ENCODE measurements at regions of chr10 and their contacts with region 1.

Region 1: GRCh38 chr10:25016376-25017154 is at the start of gene THNSL1:
- DNase-seq: peak; percentile 100
- H3K4me3 ChIP-seq: peak within 1 kb of the TSS; percentile 66
- H3K4me3 Mint-ChIP-seq: peak within 1 kb of the TSS; percentile 86
- H3K27ac Mint-ChIP-seq: peak within 1 kb of the TSS; percentile 97
- H3K4me1 ChIP-seq: peaks cover 8% of the 10 kb centered on the region; the same call in 1 of the 2 replicates
- H3K4me1 Mint-ChIP-seq: peaks cover 14% of the 10 kb centered on the region
- H3K27me3 ChIP-seq: no peaks in the 10 kb centered on the region
- H3K27me3 Mint-ChIP-seq: no peaks in the 10 kb centered on the region
- CTCF ChIP-seq: no peak
- total RNA-seq, gene THNSL1: 6.3 and 6.8 TPM in 2 replicates

Region 2: DNA sequence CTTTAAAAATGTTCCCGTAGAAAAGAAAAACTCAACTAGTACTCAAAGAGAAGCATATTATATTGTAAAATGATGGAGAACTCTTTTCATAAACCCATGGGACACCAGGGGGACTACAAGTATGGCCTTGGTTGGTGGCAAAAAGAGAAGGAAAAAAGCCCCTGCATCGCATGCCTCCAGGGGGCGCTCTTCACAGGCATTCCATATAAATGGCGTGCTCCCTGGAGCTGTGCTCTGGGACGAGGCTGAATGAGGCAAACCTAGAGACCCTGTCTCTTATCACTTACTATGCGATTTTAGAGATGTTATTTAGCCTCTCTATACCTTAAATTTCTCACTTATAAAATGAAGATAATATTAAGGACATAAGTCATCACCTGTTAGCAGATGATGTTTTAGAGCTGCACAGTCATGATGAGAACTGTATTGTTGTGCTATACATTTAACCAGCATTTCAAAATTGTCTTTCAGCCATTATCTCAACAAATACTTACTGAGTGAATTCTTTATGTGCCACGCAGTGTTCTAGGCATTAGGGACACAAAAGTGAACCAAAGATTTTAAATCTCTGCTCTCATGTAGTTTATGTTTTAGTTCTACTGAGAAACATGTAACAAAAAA is 398.7 kb before region 1 on chr10:
- CTCF ChIA-PET with region 1: interaction called, 6 read pairs
- POLR2A ChIA-PET with region 1: no interaction called
- intact Hi-C with region 1: loop called (anchors 1 kb)
- DNase-seq: peak; percentile 79 to 87
- H3K4me3 ChIP-seq: no peak overlapping the region
- H3K4me3 Mint-ChIP-seq: peak overlapping the region; percentile 67
- H3K27ac Mint-ChIP-seq: peak overlapping the region; percentile 69
- H3K4me1 ChIP-seq: peaks cover 21% of the 10 kb centered on the region
- H3K4me1 Mint-ChIP-seq: peaks cover 13% of the 10 kb centered on the region
- H3K27me3 ChIP-seq: no peaks in the 10 kb centered on the region
- H3K27me3 Mint-ChIP-seq: no peaks in the 10 kb centered on the region
- CTCF ChIP-seq: peak; percentile 94 to 99

Region 3: DNA sequence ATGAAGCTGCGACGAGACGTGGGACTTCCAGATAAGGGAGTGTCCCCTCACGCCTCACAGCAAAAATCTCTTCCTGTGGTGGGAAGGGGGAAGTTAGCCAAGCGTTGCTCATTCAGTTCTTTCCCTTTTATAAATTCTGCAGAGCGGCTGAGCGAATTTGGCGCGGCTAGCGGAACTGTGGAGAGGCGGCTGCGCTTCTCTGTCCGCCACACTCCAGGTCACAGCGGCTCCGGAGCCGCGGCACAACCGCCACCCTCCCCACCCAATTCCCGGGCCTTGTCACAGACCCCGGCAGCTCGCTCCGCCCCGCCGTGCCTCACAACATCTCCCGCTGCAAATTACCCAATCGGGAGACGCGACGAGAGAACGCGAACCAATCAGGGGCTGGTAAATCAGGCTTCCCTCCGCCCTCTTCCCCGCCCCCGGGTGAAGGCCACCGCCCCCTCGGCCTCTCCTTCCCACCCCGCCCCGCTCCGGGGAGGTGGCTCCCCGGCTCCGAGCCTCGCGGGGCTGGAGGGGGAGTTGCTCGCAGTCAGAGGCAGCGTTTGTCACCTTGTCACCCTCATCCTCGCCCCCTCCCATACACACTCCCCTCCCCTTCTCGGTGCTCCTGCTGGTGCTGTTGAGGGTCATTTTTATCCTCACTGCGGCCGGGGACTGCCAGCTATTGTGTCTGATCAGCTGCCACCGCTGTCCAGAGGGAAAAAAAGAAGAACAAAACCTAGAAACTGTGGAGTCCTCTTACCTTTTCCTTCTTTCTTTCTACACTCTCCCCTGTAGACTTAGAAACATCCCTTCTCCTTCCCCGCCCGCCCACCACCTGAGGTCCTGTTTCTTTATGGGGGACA is 292.0 kb before region 1 on chr10:
- CTCF ChIA-PET with region 1: no interaction called
- POLR2A ChIA-PET with region 1: interaction called, 3 read pairs
- intact Hi-C with region 1: loop called (anchors 1 kb)
- DNase-seq: peak; percentile 99 to 100
- H3K4me3 ChIP-seq: peak overlapping the region; percentile 85
- H3K4me3 Mint-ChIP-seq: no peak overlapping the region
- H3K27ac Mint-ChIP-seq: peak overlapping the region; percentile 86
- H3K4me1 ChIP-seq: peaks cover 8% of the 10 kb centered on the region
- H3K4me1 Mint-ChIP-seq: peaks cover 21% of the 10 kb centered on the region
- H3K27me3 ChIP-seq: no peaks in the 10 kb centered on the region
- H3K27me3 Mint-ChIP-seq: no peaks in the 10 kb centered on the region
- CTCF ChIP-seq: no peak

Region 4: DNA sequence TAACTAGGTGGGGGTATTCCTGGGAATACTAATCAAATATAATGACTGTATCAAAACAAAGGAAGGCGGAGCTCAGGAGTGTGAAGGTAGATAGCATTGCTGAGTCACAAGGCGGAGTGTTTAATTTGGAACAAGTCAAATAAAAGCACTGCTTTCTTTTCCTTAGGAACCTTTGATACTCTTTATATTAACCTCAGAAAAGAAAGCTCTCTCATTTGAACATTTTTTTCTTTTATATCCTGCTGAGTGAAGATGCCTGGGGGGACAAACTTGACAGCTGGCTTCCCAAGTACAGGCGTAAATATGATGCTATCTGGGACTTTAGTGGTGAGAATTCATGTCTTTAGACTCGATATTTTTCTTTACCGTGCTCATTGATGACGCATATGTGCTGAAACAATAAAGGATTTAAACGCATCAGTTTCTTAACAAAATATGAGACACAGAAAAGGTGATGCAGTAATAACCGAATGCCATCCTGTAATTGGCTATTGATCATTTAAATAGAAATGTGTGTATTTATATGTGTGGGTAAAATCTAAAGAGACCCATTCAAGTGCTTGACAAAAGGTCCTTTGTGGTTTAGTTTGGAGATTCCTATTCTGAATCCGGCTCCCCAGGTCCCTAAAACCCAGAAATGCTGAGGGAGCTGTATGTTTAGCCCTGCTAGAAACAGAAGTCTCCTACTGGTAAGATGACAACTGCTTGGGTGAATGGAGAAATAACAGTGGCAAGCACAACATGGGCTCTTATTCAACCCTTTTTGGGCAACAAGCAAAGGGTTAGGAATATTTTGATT is 166.9 kb before region 1 on chr10:
- CTCF ChIA-PET with region 1: no interaction called
- POLR2A ChIA-PET with region 1: no interaction called
- intact Hi-C with region 1: loop called (anchors 5 kb)
- DNase-seq: no peak
- H3K4me3 ChIP-seq: no peak overlapping the region
- H3K4me3 Mint-ChIP-seq: no peak overlapping the region
- H3K27ac Mint-ChIP-seq: no peak overlapping the region
- H3K4me1 ChIP-seq: peaks cover 10% of the 10 kb centered on the region
- H3K4me1 Mint-ChIP-seq: peaks cover 10% of the 10 kb centered on the region
- H3K27me3 ChIP-seq: no peaks in the 10 kb centered on the region
- H3K27me3 Mint-ChIP-seq: no peaks in the 10 kb centered on the region
- CTCF ChIP-seq: no peak

Region 5: DNA sequence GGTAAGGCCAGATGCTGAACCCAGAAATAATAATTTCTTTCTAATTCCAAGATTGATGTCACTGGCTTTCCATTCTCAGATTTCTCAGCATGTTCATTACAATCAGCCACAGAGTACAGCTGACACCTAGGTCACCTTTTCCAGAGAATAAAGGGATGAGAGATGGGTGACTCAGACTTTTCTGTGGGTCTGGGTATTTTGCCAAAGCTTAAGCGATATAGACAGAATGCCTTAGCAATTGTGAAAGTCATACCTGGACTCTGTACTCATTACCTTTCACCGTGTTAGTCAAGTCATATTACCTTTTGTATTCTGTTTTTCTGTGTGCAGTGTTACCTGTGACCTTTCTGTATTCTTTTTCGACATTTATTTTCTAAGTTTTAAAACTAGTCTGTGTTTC is 53.6 kb before region 1 on chr10:
- CTCF ChIA-PET with region 1: no interaction called
- POLR2A ChIA-PET with region 1: no interaction called
- intact Hi-C with region 1: loop called (anchors 2 kb)
- DNase-seq: peak in 1 of 2 experiments; percentile 61
- H3K4me3 ChIP-seq: no peak overlapping the region
- H3K4me3 Mint-ChIP-seq: peak overlapping the region; percentile 27
- H3K27ac Mint-ChIP-seq: peak overlapping the region; percentile 58
- H3K4me1 ChIP-seq: peaks cover 20% of the 10 kb centered on the region
- H3K4me1 Mint-ChIP-seq: peaks cover 11% of the 10 kb centered on the region
- H3K27me3 ChIP-seq: no peaks in the 10 kb centered on the region
- H3K27me3 Mint-ChIP-seq: no peaks in the 10 kb centered on the region
- CTCF ChIP-seq: no peak

Region 6: DNA sequence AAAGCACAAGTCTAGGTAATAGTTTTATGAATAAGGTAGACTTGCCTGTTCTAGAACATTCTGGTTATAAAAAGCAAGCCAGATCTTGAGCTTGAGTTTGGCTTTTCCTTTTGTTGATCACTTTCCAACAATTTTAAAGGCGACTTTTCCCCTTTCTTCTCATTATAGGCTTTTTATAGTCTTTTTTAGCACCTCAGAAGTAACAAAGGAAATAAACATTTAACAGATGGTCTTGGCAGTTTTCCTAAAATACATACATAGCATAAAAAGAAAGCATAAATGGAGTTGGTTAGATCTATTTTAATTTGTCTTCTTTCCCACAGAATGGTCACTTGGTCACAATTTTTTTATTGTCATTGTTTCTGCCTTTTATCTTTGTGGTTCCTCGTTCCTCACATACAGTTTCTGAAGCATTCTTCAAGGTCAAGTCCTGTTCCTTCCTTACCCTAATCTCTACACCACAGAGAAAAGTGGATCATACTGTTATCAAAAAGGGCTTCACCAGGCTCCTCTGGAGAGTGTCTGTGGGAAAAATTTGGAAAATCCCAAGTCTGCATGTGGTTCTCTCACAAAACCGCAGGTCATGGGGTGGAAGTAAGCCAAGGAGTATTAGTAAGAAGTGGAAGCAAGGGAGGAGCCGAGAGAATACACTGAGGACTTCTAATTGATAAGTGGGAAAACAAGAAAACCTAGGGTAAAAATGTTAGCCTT is 31.2 kb after region 1 on chr10:
- CTCF ChIA-PET with region 1: no interaction called
- POLR2A ChIA-PET with region 1: no interaction called
- intact Hi-C with region 1: no loop called
- DNase-seq: no peak
- H3K4me3 ChIP-seq: no peak overlapping the region
- H3K4me3 Mint-ChIP-seq: no peak overlapping the region
- H3K27ac Mint-ChIP-seq: no peak overlapping the region
- H3K4me1 ChIP-seq: no peaks in the 10 kb centered on the region; the same call in 1 of the 2 replicates
- H3K4me1 Mint-ChIP-seq: no peaks in the 10 kb centered on the region
- H3K27me3 ChIP-seq: no peaks in the 10 kb centered on the region
- H3K27me3 Mint-ChIP-seq: no peaks in the 10 kb centered on the region
- CTCF ChIP-seq: no peak

Region 7: DNA sequence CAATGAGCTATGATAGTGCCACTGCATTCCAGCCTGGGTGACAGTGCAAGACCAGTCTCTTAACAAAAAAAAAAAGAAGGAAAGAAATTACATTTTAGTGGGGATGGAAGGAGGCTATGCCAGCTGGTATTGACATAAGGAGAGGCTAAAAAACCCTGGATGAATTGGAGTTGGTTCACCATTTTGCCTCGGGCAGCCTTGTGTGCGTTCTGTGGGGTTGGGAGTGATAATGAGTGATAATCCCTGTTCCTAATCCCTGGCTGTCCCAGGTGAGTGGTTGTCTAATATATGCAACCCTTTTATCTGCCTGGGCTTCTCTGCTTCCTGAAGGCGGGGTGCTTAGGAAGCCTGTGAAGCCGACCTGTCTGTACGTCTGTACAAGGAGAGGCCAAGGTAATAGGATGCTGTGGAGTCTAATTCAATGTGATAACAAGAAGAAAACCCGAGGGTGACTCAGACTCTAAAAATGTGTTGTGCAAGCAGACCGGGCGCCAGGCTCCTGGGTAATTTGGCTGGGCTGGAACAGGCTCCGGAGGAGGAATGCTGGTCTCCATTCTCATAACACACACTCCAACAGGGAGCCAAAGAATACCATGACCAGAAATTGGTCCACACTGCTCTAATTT is 43.3 kb after region 1 on chr10:
- CTCF ChIA-PET with region 1: interaction called, 3 read pairs
- POLR2A ChIA-PET with region 1: no interaction called
- intact Hi-C with region 1: loop called (anchors 1 kb)
- DNase-seq: peak; percentile 94 to 95
- H3K4me3 ChIP-seq: no peak overlapping the region
- H3K4me3 Mint-ChIP-seq: peak overlapping the region; percentile 70
- H3K27ac Mint-ChIP-seq: peak overlapping the region; percentile 94
- H3K4me1 ChIP-seq: peaks cover 35% of the 10 kb centered on the region
- H3K4me1 Mint-ChIP-seq: peaks cover 48% of the 10 kb centered on the region
- H3K27me3 ChIP-seq: no peaks in the 10 kb centered on the region
- H3K27me3 Mint-ChIP-seq: no peaks in the 10 kb centered on the region
- CTCF ChIP-seq: no peak

Region 8: GRCh38 chr10:25174461-25175230 is 158.1 kb after region 1 on chr10 and contains the start of gene GPR158:
- CTCF ChIA-PET with region 1: no interaction called
- POLR2A ChIA-PET with region 1: no interaction called
- intact Hi-C with region 1: loop called (anchors 1 kb)
- DNase-seq: peak; percentile 96 to 98
- H3K4me3 ChIP-seq: peak within 1 kb of the TSS; percentile 81
- H3K4me3 Mint-ChIP-seq: peak within 1 kb of the TSS; percentile 89
- H3K27ac Mint-ChIP-seq: no peak within 1 kb of the TSS
- H3K4me1 ChIP-seq: peaks cover 6% of the 10 kb centered on the region
- H3K4me1 Mint-ChIP-seq: no peaks in the 10 kb centered on the region
- H3K27me3 ChIP-seq: 0 out of 2 replicates have a peak, but pooled peaks cover 3% of the 10 kb centered on the region
- H3K27me3 Mint-ChIP-seq: peaks cover 19% of the 10 kb centered on the region
- CTCF ChIP-seq: no peak
- total RNA-seq, gene GPR158: 0.05 and 0.07 TPM in 2 replicates